ENCODE measurements at regions of chr9 and their contacts with region 1.

Region 1: DNA sequence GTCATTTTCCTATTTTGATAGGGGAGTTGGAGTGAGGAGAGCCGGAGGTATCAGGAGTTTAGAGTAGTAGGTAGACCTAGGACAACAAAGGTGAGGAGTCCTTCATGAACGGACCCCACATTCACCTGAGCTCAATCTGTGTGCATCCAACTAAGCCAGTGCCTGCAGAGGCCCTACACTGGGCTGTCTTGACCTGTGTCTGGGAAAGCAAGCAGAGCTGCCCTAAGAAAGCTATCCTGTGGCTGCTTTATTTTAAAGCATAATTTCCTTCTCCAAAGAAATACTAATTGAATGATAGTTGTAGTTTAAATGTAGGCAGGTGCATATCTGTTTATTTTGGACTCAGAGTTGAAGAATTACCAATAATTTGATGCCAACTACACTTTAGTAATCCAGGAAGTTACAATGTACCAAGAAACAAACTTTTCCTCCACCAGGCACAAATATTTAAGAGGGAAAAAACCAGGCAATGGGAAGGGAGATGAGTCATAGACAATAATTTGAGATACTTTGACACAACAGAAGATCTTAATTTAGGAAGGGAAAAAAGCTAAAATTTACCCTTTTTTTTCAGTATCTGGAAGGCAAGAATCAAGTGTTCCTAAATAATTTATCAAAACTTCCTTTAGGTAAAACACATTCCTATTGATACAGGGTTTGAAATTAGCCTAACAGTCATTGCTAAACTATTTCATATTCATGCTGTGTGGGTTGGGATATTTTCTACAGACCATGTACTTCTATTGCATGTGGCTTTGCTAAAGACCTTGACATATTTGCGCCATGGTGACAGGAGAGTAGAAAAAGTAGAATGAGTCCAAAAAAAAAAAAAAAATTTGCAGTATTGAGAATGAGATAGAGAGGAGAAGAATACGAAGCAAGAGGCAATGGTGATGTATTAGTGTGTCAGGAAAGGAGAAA is 376.6 kb upstream of the TUSC1 start:
- DNase-seq: no peak

Region 2: GRCh38 chr9:24912767-24913166 is 1142.1 kb before region 1 on chr9:
- intact Hi-C with region 1: loop called in 1 of 2 experiments (anchors 5 kb)
- DNase-seq: no peak

Region 3: GRCh38 chr9:25302601-25303000 is 752.3 kb before region 1 on chr9:
- intact Hi-C with region 1: loop called in 1 of 2 experiments (anchors 10 kb)
- DNase-seq: no peak

Region 4: DNA sequence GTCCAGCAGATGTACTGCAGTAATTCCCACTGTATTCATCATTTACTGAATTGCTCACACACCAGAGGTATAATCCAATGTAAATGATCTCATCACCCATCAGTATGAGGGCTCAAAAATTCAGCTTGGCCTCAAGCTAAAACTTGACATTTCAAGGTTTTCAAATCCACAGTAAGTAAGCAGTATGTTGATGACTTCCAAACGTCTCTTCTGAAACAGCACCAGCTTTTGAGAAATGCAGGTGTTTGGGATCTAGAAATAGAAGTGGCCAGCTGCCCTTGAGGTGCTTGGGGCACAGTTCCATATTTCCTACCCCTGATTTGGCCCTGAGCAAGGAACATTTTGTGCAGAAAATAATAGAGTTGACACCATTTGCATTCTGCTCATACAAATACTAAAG is 11.4 kb after region 1 on chr9:
- intact Hi-C with region 1: no loop called
- DNase-seq: no peak